Activated CD8-positive, alpha-beta T cell treated with anti-CD3 and anti-CD28 coated beads, Interleukin-2, amount 10 ng/mL, durations not matched to agents 7 days and 5 days (primary cell): ENCODE measurements at regions of chr20 and their contacts with region 1.

Region 1: DNA sequence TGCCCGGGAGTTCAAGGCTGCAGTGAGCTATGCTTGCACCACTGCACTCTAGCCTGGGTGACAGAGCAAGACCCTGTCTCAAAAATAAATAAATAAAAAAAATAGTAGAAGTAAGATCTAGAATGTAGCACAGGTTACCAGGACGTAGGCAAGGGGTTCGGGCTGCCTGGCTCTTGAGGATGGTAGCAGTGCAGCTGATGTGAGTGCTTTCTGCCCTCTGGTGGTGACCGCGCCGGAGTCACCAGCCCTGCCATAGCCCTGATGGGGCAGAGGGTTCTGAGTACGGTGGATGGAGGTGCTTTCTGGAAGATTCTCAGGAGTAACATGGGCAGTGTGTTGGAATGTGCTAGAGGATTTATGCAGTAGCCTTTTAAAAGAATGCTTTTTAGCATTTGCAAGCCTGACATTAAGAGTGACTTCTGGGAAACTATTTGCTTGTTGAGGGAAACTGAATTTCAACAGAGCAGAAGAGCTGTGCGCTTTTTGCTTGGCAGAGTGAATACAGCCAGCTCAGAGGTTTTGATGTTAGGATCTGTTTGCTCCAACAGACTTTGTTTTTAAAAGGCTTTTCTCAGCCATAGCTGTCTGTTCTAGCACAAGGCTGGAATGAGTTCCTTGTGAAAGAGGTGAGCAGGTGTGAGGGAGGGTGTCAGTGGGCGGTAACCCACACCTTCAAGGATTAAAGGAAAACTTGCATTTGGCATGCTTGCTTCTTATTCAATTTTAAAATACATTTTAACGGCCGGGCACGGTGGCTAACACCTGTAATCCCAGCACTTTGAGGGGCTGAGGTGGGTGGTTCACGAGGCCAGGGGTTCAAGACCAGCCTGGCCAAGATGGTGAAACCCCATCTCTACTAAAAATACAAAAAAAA is 65.9 kb downstream of the PTPN1 start:
- DNase-seq: peak; percentile 74
- ATAC-seq: peak; percentile 88
- H3K4me3 Mint-ChIP-seq: no peak overlapping the region
- H3K27ac Mint-ChIP-seq: peak overlapping the region; percentile 62
- H3K4me1 Mint-ChIP-seq: peaks cover 22% of the 10 kb centered on the region
- H3K27me3 Mint-ChIP-seq: no peaks in the 10 kb centered on the region

Region 2: GRCh38 chr20:50467718-50468356 is 108.2 kb before region 1 on chr20:
- CTCF ChIA-PET with region 1: interaction called, 22 read pairs
- POLR2A ChIA-PET with region 1: interaction called, 3 read pairs
- DNase-seq: peak; percentile 39
- ATAC-seq: no peak
- H3K4me3 Mint-ChIP-seq: no peak overlapping the region
- H3K27ac Mint-ChIP-seq: no peak overlapping the region
- H3K4me1 Mint-ChIP-seq: peaks cover 20% of the 10 kb centered on the region
- H3K27me3 Mint-ChIP-seq: peaks cover 2% of the 10 kb centered on the region

Region 3: DNA sequence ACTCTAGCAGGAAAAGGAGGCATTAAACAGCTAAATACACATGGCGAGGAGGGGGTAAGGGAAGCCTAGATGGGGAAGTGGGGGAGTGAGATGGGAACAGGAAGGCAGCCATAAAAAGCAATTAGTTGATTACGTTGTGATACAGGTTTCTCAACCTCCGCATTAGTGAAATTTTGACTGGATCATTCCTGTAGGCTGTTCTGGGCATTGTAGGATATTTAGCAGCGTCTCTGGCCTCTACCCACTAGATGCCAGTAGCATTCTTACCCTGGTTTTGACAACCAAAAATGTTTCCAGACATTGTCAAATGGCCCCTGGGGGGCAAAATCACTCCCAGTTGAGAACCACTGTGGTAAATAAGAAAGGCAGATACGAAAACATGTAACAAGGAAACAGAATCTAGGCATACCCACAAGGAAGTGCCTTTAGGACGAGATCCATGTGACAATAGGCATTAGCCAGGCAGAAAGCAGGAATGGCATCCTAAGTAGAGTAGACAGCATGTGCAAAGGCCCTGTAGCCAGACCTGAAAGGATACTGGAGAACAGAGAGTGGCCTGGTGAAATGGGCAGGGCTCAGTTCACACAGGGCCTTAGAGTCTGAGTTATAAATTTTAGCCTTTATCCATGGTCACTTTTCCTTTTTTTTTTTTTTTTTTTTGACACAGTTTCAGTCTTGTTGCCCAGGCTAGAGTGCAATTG is 91.7 kb before region 1 on chr20:
- CTCF ChIA-PET with region 1: interaction called, 33 read pairs
- POLR2A ChIA-PET with region 1: no interaction called
- DNase-seq: no peak
- ATAC-seq: no peak
- H3K4me3 Mint-ChIP-seq: peak overlapping the region; percentile 81
- H3K27ac Mint-ChIP-seq: peak overlapping the region; percentile 94
- H3K4me1 Mint-ChIP-seq: peaks cover 46% of the 10 kb centered on the region
- H3K27me3 Mint-ChIP-seq: no peaks in the 10 kb centered on the region

Region 4: GRCh38 chr20:50504231-50504823 is 71.8 kb before region 1 on chr20:
- CTCF ChIA-PET with region 1: interaction called, 158 read pairs
- POLR2A ChIA-PET with region 1: no interaction called
- DNase-seq: no peak
- ATAC-seq: no peak
- H3K4me3 Mint-ChIP-seq: no peak overlapping the region
- H3K27ac Mint-ChIP-seq: no peak overlapping the region
- H3K4me1 Mint-ChIP-seq: peaks cover 18% of the 10 kb centered on the region
- H3K27me3 Mint-ChIP-seq: no peaks in the 10 kb centered on the region

Region 5: GRCh38 chr20:50563133-50563944 is 12.7 kb before region 1 on chr20:
- CTCF ChIA-PET with region 1: interaction called, 19 read pairs
- POLR2A ChIA-PET with region 1: no interaction called
- DNase-seq: no peak
- ATAC-seq: no peak
- H3K4me3 Mint-ChIP-seq: no peak overlapping the region
- H3K27ac Mint-ChIP-seq: peak overlapping the region; percentile 19
- H3K4me1 Mint-ChIP-seq: peaks cover 32% of the 10 kb centered on the region
- H3K27me3 Mint-ChIP-seq: no peaks in the 10 kb centered on the region

Region 6: DNA sequence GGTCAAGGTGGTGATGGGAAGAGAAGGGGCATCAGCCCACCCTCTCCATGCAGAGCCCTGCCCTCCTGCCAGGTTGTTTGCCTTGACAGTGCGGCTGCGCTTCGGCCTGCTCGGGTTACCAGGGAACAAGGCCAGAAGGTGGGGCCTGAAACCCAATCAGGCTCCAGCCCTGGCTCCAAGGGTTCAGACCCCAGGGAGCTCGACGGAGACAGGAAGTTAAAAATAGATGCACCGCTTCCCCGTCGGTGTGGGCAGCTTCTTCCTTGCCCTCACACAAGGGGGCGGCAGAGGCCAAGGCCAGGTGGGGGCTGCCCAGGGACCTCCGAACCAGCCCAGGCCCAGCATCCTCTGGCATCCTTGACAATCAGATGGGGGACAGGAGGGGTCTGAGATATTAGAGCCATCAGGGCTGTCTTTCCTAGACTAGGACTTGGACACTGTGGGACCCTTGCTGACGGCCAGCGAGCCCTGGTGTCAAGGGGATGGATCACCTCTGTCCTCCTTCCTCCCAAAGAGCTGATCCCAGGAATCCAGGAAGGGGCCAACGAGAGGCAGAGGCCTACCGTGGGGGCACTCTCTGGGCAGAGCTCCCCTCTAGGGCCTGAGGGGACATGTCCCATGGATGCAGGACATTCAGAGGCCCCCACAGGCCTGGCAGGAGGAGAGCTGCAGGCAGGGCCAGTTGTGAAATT is 50.0 kb after region 1 on chr20:
- CTCF ChIA-PET with region 1: no interaction called
- POLR2A ChIA-PET with region 1: no interaction called
- DNase-seq: peak; percentile 35
- ATAC-seq: no peak
- H3K4me3 Mint-ChIP-seq: no peak overlapping the region
- H3K27ac Mint-ChIP-seq: no peak overlapping the region
- H3K4me1 Mint-ChIP-seq: no peaks in the 10 kb centered on the region
- H3K27me3 Mint-ChIP-seq: no peaks in the 10 kb centered on the region

Region 7: DNA sequence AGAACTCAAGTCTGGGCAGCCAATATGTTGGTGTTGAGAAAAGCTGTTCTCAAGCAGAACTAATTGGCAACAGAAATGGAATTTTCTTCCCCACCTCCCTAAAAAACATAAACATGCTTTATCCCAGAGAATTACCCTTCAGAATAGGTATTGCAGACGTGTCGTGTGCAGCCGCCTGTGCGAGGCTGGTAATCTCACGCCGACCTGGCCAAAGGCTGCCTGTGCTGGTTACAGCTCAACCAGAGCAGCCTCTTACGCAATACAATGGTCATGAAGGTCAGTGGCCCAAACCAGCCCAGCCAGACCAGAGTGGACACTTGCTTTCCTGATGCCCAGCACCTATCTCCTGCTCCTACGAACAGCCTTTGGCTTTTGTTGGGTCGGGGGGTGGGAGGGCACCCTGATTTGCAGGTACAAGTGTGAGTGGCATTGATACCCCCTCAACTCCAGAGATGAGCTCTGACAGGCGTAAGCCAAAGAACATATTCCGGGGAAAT is 104.4 kb after region 1 on chr20:
- CTCF ChIA-PET with region 1: no interaction called
- POLR2A ChIA-PET with region 1: no interaction called
- DNase-seq: no peak
- ATAC-seq: no peak
- H3K4me3 Mint-ChIP-seq: no peak overlapping the region
- H3K27ac Mint-ChIP-seq: no peak overlapping the region
- H3K4me1 Mint-ChIP-seq: no peaks in the 10 kb centered on the region
- H3K27me3 Mint-ChIP-seq: peaks cover 2% of the 10 kb centered on the region